ENCODE measurements at regions of chr1 and their contacts with region 1.

Region 1: GRCh38 chr1:58727363-58727762 is 27.5 kb upstream of the MYSM1 start:
- DNase-seq: no peak
- H3K4me3 ChIP-seq: no peak overlapping the region
- H3K27ac ChIP-seq: peak overlapping the region; percentile 81
- H3K4me1 ChIP-seq: peaks cover 53% of the 10 kb centered on the region
- CTCF ChIP-seq: no peak

Region 2: DNA sequence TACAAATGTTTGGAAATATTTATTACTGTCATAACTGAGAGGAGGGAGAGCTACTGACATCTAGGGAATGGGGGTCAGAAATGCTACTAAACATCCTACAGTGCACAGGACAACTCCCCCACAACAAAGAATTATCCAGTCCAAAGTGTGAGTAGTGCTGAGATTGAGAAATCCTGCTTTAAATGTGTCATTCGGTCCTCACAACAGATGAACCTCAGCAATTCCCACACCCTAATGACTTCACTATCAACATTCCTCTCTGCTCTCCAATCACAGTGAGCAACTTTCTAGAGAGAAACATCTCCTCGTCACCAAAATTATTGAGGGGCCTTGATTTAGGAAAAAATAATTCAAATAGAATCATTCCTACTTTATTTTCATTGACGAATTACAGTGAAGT is 198.8 kb before region 1 on chr1:
- CTCF ChIA-PET with region 1: no interaction called
- POLR2A ChIA-PET with region 1: interaction called, 5 read pairs
- intact Hi-C with region 1: loop called (anchors 5 kb)
- DNase-seq: no peak
- H3K4me3 ChIP-seq: no peak overlapping the region
- H3K27ac ChIP-seq: no peak overlapping the region
- H3K4me1 ChIP-seq: peaks cover 40% of the 10 kb centered on the region
- CTCF ChIP-seq: no peak

Region 3: DNA sequence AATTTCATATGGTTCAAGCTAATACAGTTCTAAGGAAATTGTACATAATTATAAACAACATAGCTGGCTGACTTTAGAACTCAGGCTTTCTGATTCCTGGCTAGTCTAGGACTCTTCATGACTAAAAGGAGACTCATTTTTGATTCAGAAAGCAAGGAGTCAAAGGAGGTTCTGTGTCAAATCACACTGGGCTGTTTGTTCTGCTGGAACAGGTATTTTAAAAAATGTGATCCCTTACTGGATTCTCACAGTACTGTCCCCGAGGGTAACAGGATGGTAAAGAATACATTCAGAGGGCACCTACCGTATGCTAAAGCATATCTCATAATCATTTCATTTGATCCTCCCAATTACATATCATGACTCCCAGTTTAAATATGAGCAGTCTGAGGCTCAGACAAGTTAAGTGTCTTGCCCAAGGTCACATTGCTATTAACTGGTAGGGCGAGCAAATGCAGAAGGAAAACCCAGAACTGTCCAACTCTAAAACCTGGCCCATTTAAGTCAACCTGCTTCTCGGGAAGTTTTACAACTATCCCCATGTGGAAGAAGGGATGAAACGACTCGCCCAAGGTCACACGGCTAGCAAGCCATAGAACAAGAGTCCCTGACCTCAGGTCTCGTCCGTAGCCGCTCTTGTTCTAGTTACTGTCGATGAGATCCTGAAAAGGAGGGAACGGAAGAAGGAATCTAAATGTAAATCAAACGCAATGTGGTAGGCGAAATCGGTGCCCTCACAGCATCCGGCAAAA is 28.2 kb before region 1 on chr1:
- CTCF ChIA-PET with region 1: interaction called, 3 read pairs
- POLR2A ChIA-PET with region 1: interaction called, 10 read pairs
- intact Hi-C with region 1: loop called (anchors 1 kb)
- DNase-seq: no peak
- H3K4me3 ChIP-seq: peak overlapping the region; percentile 100
- H3K27ac ChIP-seq: peak overlapping the region; percentile 51
- H3K4me1 ChIP-seq: peaks cover 8% of the 10 kb centered on the region
- CTCF ChIP-seq: no peak

Region 4: GRCh38 chr1:58704616-58705021 is 22.7 kb before region 1 on chr1:
- CTCF ChIA-PET with region 1: interaction called, 3 read pairs
- POLR2A ChIA-PET with region 1: interaction called, 10 read pairs
- intact Hi-C with region 1: loop called (anchors 1 kb)
- DNase-seq: no peak
- H3K4me3 ChIP-seq: no peak overlapping the region
- H3K27ac ChIP-seq: no peak overlapping the region
- H3K4me1 ChIP-seq: no peaks in the 10 kb centered on the region
- CTCF ChIP-seq: no peak

Region 5: DNA sequence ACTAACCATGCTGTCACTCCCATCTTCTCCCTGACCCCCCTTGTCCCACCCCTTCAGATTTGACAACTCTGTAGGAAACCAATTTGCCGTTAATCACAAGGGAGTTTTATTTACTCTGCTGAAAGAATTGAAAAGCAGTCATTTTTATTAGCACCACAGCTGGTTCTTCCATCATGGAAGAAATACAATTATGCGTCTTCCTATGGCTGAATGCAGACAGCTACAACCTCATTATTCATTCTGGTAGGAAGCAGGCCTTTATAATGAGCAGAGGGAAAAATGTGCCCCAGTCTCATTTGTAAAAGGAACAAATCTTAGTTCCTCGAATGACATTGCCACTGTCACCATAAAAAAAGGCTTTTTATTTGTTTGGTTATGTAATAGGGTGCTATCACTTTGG is 21.3 kb after region 1 on chr1:
- CTCF ChIA-PET with region 1: no interaction called
- POLR2A ChIA-PET with region 1: no interaction called
- intact Hi-C with region 1: no loop called
- DNase-seq: no peak
- H3K4me3 ChIP-seq: no peak overlapping the region
- H3K27ac ChIP-seq: no peak overlapping the region
- H3K4me1 ChIP-seq: no peaks in the 10 kb centered on the region
- CTCF ChIP-seq: no peak

Region 6: DNA sequence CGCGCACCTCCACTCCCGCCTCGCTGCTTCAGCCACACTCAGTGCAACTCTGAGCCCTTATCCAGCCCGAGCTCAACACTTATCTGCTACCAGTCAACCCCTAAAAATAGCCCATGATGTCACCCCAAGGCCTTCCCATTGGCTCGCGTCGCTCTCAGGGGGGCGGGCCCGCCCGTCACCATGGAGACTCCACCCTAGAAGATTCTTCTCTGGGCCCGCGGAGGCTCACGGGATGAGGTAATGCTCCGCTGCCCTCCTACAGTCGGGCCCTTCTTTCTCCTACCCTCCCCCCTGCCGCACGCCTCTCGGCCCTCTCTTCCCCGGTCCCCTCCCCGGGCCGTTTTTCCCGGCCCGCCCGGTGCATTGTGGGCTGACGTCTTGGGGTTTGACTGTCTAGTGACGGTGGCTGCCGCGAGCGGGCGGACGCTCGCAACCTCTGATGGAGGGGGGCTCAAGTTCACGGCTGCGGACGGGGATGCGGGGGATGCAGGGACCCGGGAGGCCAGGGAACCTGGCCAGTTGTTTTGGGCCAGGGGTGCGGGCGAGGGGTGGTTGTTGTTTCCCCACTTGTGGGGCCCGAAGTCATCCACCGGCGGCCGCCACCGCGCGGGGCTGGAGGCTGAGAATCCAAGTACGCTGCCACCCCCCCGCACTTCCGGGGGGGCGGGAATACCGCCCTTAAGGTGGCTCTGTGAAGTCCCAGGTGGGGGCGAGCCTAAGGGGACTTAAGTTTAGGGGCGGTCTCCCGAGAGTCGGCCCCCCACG is 56.8 kb after region 1 on chr1 and contains the start of gene JUN:
- CTCF ChIA-PET with region 1: no interaction called
- POLR2A ChIA-PET with region 1: no interaction called
- intact Hi-C with region 1: loop called (anchors 1 kb)
- DNase-seq: peak; percentile 99
- H3K4me3 ChIP-seq: peak within 1 kb of the TSS; percentile 80
- H3K27ac ChIP-seq: peak within 1 kb of the TSS; percentile 67
- H3K4me1 ChIP-seq: peaks cover 23% of the 10 kb centered on the region
- CTCF ChIP-seq: 0 out of 2 replicates have a peak, but pooled peaks have one; percentile 5
- total RNA-seq, gene JUN: 7.7 and 8.1 TPM in 2 replicates

Region 7: GRCh38 chr1:58816072-58816746 is 88.8 kb after region 1 on chr1:
- CTCF ChIA-PET with region 1: no interaction called
- POLR2A ChIA-PET with region 1: no interaction called
- intact Hi-C with region 1: loop called (anchors 5 kb)
- DNase-seq: peak; percentile 84
- H3K4me3 ChIP-seq: peak overlapping the region; percentile 75
- H3K27ac ChIP-seq: peak overlapping the region; percentile 74
- H3K4me1 ChIP-seq: peaks cover 30% of the 10 kb centered on the region
- CTCF ChIP-seq: peak; percentile 42; the same call in 1 of the 2 replicates

Region 8: GRCh38 chr1:58968360-58968952 is 241.1 kb after region 1 on chr1:
- CTCF ChIA-PET with region 1: interaction called, 3 read pairs
- POLR2A ChIA-PET with region 1: interaction called, 3 read pairs
- intact Hi-C with region 1: loop called (anchors 5 kb)
- DNase-seq: peak; percentile 90
- H3K4me3 ChIP-seq: peak overlapping the region; percentile 37
- H3K27ac ChIP-seq: peak overlapping the region; percentile 85
- H3K4me1 ChIP-seq: peaks cover 45% of the 10 kb centered on the region
- CTCF ChIP-seq: no peak

Measured in OCI-LY7 (cell line).